Tibial artery (tissue), 4 donors: ENCODE measurements at regions of chr20 and their contacts with region 1.

Region 1: GRCh38 chr20:45823949-45824835 is 2.9 kb downstream of the TNNC2 start:
- DNase-seq: peak in 1 of 2 donors; percentile 73
- H3K4me3 ChIP-seq: peak overlapping the region; percentile 4 to 32
- H3K27ac ChIP-seq: peak overlapping the region; percentile 87 to 97
- H3K4me1 ChIP-seq: peaks cover 0 to 75% (median 47%) of the 10 kb centered on the region in 4 donors
- H3K27me3 ChIP-seq: no peaks in the 10 kb centered on the region
- CTCF ChIP-seq: peak; percentile 36 to 44

Region 2: DNA sequence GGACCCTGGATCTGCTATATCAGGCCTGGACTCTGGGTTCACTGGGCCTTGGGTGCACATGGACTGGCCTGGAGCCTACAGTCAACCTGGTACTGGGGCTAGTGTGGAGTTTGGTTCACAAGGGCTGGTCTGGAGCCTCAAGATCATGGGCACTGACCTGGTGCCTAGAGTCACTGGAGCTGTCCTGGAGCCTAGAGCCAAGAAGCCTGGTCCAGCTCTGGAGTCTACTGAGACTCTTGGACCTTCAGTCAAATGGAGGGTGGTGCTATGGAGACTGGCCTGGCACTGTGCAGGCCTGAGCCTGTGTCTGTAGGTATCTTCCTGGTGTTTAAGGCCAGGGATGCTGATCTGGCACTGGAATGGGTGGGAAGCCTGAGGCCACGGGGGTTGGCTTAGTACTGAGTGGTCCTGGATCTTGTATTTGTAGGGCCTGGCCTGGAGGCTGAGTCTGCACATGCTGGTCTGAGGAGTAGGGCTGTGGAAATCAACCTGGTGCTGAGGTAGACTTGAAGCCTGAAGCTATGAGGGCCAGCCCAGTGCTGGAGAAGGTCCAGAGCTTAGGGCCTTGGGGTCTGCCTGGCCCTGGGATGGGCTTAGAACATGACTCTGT is 176.6 kb before region 1 on chr20:
- intact Hi-C with region 1: no loop called
- DNase-seq: no peak
- H3K4me3 ChIP-seq: no peak overlapping the region
- H3K27ac ChIP-seq: no peak overlapping the region
- H3K4me1 ChIP-seq: no peaks in the 10 kb centered on the region
- H3K27me3 ChIP-seq: no peaks in the 10 kb centered on the region
- CTCF ChIP-seq: no peak

Region 3: GRCh38 chr20:45971675-45972499 is 147.7 kb after region 1 on chr20 and contains the start of gene ZNF335:
- intact Hi-C with region 1: loop called (anchors 10 kb)
- DNase-seq: peak; percentile 92 to 97
- H3K4me3 ChIP-seq: peak within 1 kb of the TSS; percentile 69 to 75
- H3K27ac ChIP-seq: peak within 1 kb of the TSS; percentile 98 to 100
- H3K4me1 ChIP-seq: peaks cover 4 to 34% (median 18%) of the 10 kb centered on the region in 4 donors
- H3K27me3 ChIP-seq: no peaks in the 10 kb centered on the region
- CTCF ChIP-seq: peak; percentile 46 to 58